ENCODE measurements at regions of chr9 and their contacts with region 1.

Region 1: DNA sequence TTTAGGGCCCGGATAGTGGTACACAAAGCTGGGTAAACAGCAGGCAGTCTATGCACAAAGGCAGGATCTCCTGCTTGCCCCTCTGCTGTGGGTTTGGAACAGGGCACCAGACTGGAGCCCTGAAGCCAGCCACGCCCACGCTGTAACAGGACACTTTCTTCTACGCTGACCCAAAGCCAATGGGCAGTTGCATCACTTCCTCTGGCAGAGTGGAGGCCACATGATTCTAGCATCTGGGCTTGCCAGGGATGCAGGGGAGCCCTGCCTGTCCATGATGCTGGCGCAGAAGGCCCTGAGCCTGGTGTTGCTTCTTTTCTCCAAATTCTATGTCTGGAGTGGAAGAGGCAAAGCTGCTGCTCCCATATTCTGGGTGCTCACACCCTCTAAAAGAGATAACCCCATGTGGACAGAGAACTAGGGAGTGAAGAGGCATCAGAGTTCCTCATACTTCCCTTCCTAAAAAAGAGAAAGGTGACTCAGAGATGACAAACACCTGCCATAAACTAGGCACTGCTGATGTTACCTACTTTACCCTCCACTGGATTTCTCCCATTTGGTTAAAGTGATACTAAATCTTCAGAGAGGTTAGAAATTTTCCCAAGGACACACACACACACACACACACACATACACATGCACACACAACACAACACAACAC is 260.3 kb upstream of the KLF4 start:
- DNase-seq: no peak
- H3K4me3 ChIP-seq: no peak overlapping the region
- H3K27ac ChIP-seq: peak overlapping the region; percentile 86 to 88 (median 86)
- H3K4me1 ChIP-seq: peaks cover 30 to 52% (median 42%) of the 10 kb centered on the region in 4 donors
- H3K27me3 ChIP-seq: no peaks in the 10 kb centered on the region
- CTCF ChIP-seq: no peak
- EP300 ChIP-seq: no peak
- POLR2A ChIP-seq: no peak

Region 2: DNA sequence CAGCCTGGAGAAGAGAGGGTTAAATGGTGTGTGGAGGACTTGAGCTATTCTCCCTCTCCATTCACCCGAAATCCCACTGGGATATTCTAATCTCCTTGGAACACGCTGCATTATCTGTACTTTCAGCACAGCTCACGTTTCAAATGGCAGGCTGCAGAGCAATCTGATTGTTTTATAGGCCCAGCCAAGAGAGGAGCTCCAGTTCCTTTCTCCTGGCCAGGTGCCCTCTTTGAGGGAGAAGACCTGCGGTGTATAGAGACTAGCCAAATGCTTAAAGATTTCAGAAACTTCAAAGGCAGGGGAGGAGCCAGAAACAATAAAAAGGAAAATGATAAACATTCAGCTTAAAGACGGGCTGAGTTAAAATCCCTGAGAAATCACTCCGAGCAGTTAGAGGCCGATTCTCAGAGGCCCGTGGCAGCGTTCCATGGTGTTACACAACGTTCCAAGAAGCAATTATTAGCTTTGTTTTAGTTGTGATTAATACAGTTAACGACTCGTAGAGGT is 303.7 kb after region 1 on chr9:
- intact Hi-C with region 1: loop called (anchors 10 kb)
- DNase-seq: no peak
- H3K4me3 ChIP-seq: peak overlapping the region in 3 of 4 donors; percentile 14 to 22 (median 16)
- H3K27ac ChIP-seq: peak overlapping the region; percentile 66 to 76 (median 72)
- H3K4me1 ChIP-seq: peaks cover 19 to 53% (median 52%) of the 10 kb centered on the region in 4 donors
- H3K27me3 ChIP-seq: no peaks in the 10 kb centered on the region
- CTCF ChIP-seq: no peak
- EP300 ChIP-seq: no peak
- POLR2A ChIP-seq: no peak

Measured in esophagus muscularis mucosa (tissue), 4 donors.